ENCODE measurements at regions of chr7 and their contacts with region 1.

Region 1: DNA sequence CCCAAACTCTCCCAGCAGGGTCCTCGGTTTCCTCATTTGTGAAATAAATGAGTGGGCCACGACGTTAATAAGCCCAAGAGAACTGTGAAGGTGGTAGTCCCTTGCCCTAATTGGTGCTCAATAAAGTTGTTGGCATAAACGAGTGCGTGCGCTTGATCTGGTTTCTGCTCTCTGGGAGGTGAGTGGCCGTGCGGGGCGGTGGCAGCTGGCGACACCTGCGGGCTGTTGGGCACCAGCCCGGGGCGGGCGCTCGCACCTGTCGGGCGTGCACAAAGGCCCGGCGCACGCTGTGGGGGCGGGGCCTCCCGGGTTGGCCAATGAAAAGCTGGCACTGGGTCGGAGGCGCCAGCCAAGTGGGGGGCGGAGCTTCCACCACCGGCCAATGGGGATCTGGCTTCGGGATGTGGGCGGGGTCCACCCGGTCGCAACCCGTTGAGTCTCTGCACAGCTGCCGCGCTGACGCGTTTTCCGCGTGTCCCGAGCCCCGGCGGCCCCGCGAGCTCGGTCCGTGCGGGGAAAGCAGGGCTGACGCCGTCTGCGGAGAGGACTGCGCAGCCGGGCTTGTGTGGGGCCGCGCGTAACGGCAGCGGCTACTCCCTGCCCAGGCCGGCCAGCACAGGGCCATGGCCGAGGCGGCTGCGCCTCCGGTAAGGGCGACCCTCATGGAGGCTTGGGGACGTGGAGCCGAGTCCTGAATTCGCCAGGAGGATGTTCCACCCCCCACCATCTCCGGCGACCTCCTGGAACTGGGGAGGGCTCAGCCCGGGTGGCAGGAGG is 23.0 kb downstream of the ZNF783 start:
- DNase-seq: peak; percentile 99
- H3K4me3 Mint-ChIP-seq: peak overlapping the region; percentile 82
- H3K27ac Mint-ChIP-seq: peak overlapping the region; percentile 48
- H3K4me1 Mint-ChIP-seq: peaks cover 37% of the 10 kb centered on the region
- H3K27me3 Mint-ChIP-seq: no peaks in the 10 kb centered on the region

Region 2: DNA sequence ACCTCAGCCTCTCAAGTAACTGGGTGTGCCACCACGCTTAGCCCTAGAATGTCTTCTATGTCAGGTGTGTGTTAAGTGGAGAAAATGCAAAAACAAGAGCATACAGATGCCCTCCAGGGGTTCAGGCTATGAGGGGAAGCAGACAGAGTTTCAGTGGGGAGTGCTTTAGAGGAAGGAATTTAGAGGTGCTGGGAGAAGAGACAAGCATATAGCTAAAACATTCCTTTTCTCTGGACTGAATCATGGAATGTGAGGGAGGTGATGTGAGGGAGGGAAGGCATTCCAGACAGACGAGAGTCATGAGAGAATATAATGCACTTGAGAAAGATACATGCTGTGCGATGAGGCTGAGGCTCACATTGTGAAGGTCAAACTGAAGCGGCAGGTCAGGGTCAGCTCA is 187.9 kb before region 1 on chr7:
- CTCF ChIA-PET with region 1: no interaction called
- POLR2A ChIA-PET with region 1: no interaction called
- intact Hi-C with region 1: no loop called
- DNase-seq: no peak
- H3K4me3 Mint-ChIP-seq: no peak overlapping the region
- H3K27ac Mint-ChIP-seq: no peak overlapping the region
- H3K4me1 Mint-ChIP-seq: no peaks in the 10 kb centered on the region
- H3K27me3 Mint-ChIP-seq: no peaks in the 10 kb centered on the region

Region 3: GRCh38 chr7:149125863-149126661 is 159.0 kb before region 1 on chr7 and contains the start of gene ZNF425:
- CTCF ChIA-PET with region 1: interaction called, 7 read pairs
- POLR2A ChIA-PET with region 1: interaction called, 3 read pairs
- intact Hi-C with region 1: loop called (anchors 5 kb)
- DNase-seq: peak; percentile 95
- H3K4me3 Mint-ChIP-seq: peak within 1 kb of the TSS; percentile 98
- H3K27ac Mint-ChIP-seq: peak within 1 kb of the TSS; percentile 98
- H3K4me1 Mint-ChIP-seq: peaks cover 18% of the 10 kb centered on the region
- H3K27me3 Mint-ChIP-seq: no peaks in the 10 kb centered on the region
- total RNA-seq, gene ZNF425: 0.74 to 0.75 TPM

Region 4: DNA sequence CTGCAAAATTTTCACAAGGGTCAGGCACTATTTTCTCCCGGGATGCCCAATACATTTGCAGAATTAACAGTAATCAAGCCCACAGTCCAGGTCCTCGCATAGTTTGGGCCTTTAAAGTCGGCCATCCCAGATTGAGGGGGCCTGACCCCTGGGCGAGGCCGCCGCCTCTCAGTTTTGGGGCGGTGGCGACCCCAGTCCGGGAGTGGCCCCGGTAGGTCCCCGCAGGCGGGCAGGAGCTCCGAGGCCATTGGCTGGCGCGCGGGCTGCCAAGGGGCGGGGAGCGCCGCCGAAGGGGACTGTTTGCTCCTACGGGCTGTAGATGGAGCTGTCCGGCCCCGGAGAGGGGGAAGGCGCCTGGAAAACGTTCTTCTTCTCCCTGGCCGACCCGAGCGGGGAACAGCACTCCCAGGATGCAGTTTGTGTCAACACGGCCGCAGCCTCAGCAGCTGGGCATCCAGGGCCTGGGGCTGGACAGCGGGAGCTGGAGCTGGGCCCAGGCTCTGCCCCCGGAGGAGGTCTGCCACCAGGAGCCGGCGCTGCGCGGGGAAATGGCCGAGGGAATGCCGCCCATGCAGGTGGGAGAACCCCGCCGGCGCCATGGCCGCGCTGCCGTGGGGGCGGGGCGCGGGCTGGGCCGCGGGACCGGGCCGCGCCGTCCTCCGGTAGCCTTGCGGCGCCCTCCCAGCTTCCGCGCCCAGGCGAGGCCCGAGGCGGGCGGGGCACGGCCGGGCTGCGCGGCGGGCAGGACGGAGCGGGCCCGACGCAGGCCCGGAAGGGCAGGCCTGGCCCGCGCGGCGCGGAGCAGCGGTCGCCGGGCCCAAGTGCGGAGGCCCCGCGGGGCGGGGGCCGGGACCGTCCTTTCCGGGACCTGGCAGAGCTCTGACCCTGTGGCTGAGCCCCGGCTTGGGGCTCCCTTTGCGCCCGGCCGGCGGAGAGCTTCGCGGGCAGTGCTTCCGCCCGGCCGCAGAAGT is 89.6 kb before region 1 on chr7 and contains the start of gene ZNF282:
- CTCF ChIA-PET with region 1: interaction called, 24 read pairs
- POLR2A ChIA-PET with region 1: interaction called, 5 read pairs
- intact Hi-C with region 1: loop called (anchors 1 kb)
- DNase-seq: peak; percentile 89
- H3K4me3 Mint-ChIP-seq: peak within 1 kb of the TSS; percentile 92
- H3K27ac Mint-ChIP-seq: peak within 1 kb of the TSS; percentile 93
- H3K4me1 Mint-ChIP-seq: peaks cover 51% of the 10 kb centered on the region
- H3K27me3 Mint-ChIP-seq: no peaks in the 10 kb centered on the region
- total RNA-seq, gene ZNF282: 61.7 to 61.9 TPM

Region 5: DNA sequence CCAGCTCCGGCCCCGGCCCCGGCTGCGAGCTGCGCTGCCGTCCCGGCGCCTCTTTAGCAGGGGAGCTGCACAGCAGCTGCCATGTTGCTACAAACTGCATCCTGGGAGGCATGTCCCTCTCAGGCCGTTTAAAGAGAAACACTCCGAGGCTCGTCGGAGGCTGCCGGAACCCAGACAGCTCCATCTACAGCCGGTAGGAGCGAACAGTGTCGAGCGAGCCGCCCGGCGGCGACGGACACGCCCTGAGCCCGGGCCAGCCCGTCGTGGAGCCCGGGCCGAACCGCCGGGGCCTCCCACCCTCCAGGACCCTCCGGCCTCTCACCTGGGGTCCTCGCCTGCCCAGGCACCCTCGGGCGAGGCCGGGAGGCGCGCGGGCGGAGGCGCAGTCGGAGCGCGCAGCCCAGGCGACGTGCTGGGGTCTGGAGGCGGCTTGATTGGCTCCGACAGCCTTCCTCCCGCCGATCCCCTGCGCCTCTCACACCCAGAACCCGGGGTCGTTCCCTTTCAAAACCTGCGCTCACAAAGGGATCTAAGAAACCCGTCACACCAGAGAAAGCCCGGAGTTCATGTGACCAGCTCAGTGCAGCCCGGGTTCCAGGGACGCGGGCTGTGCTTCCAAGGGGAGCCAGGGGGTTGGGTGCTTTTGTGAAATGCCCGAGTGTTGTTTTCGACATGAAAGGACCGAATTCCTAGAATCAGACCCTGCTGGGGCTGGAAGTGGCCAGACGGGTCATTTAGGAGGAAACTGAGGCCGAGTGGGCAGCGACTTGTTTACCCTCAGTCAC is 175.6 kb after region 1 on chr7 and contains the start of gene ZNF777:
- CTCF ChIA-PET with region 1: interaction called, 14 read pairs
- POLR2A ChIA-PET with region 1: no interaction called
- intact Hi-C with region 1: no loop called
- DNase-seq: peak; percentile 88
- H3K4me3 Mint-ChIP-seq: peak within 1 kb of the TSS; percentile 82
- H3K27ac Mint-ChIP-seq: peak within 1 kb of the TSS; percentile 44
- H3K4me1 Mint-ChIP-seq: peaks cover 19% of the 10 kb centered on the region
- H3K27me3 Mint-ChIP-seq: peaks cover 2% of the 10 kb centered on the region
- total RNA-seq, gene ZNF777: 10.1 to 11.4 TPM

Measured in activated CD4-positive, alpha-beta memory T cell treated with anti-CD3 and anti-CD28 coated beads for 36 hours (primary cell).